Activated naive CD4-positive, alpha-beta T cell treated with anti-CD3 and anti-CD28 coated beads for 36 hours (primary cell): ENCODE measurements at regions of chr10 and their contacts with region 1.

Region 1: GRCh38 chr10:100373298-100374136 is 26.5 kb downstream of the SCD start:
- DNase-seq: peak; percentile 99
- H3K4me3 Mint-ChIP-seq: no peak overlapping the region
- H3K27ac Mint-ChIP-seq: no peak overlapping the region
- H3K4me1 Mint-ChIP-seq: peaks cover 30% of the 10 kb centered on the region
- H3K27me3 Mint-ChIP-seq: no peaks in the 10 kb centered on the region

Region 2: DNA sequence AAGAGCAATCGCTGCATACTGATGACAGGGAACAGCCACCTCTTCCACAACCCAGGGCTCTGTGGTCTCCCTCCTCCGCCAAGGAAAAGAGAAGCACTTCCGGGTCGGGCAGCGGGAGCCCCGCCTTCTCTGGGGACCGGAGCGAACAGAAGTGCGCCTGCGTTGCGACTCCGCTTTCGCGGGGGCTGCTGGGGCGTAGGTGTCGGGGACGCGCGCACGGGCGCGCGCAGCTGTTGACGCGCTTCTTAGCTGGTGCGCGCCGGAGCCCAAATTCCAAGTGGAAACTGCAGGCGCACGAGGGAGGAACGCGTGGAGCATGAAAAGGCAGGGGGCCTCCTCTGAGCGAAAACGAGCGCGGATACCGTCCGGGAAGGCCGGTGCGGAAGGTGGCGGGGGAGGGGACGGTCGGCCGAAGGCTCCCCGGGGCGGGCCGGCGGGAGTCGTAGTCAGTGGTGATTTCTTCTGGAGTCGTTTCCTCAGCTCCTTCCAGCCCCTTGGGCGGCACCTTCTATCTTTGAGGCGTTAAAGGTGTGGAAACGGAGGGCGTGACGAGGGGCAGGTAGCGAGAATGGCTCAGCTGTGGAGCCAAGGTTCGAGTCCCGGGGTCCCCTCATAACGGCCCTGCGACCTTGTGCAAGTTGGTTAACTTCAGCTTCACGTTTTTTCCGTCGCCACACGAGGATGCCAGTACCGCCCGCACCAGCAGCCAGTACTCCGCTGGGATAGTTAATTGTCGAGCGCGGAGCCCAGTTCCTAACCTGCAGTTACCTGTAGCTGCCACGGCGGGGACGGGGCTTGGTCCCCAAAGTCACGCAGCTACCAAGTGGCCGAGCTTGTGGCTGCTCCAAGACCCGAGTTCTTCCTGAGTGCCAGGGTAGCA is 641.2 kb before region 1 on chr10 and contains the starts of genes COX15 and CUTC:
- CTCF ChIA-PET with region 1: no interaction called
- intact Hi-C with region 1: loop called (anchors 5 kb)
- DNase-seq: peak; percentile 96
- H3K4me3 Mint-ChIP-seq: peak within 1 kb of the TSS; percentile 99
- H3K27ac Mint-ChIP-seq: peak within 1 kb of the TSS; percentile 96
- H3K4me1 Mint-ChIP-seq: peaks cover 32% of the 10 kb centered on the region
- H3K27me3 Mint-ChIP-seq: no peaks in the 10 kb centered on the region
- total RNA-seq, gene COX15: 36.3 to 38.8 TPM
- total RNA-seq, gene CUTC: 21.6 to 21.9 TPM

Region 3: GRCh38 chr10:100229819-100230422 is 143.6 kb before region 1 on chr10:
- CTCF ChIA-PET with region 1: no interaction called
- intact Hi-C with region 1: loop called (anchors 2 kb)
- DNase-seq: no peak
- H3K4me3 Mint-ChIP-seq: peak overlapping the region; percentile 91
- H3K27ac Mint-ChIP-seq: peak overlapping the region; percentile 90
- H3K4me1 Mint-ChIP-seq: peaks cover 31% of the 10 kb centered on the region
- H3K27me3 Mint-ChIP-seq: no peaks in the 10 kb centered on the region

Region 4: DNA sequence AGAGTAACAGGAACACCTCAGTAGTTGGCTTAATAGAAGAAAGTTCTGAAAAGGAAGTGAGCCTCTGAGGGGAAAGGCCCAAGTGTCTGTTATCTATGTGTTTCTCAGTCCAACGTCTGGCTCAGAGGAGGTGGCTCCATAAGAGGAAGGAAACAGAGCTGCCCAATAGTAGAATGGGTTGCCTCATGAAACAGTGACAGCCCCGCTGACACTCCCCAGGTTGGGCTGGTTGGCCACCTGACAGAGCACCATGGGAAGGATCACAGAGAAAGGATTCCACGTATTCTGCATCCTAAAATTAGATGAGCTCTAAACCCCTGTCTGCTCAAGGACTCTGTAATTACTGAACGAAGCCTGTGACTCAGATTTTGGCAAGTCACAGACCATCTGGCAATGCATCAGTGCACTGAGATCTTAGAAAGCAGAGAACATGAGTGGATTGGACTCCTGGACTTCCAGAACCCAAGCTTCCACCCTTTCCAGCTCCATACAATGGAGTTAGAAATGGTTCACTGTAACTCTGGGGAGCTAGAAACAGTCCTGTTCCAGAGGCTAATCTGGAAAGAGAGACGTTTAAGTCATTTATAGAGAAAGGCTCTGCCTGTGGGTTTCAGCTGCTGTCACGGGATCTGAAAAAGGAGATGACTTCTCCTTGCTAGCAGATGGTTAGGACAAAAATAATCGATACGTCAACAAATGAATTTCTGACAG is 46.4 kb before region 1 on chr10:
- CTCF ChIA-PET with region 1: interaction called, 3 read pairs
- intact Hi-C with region 1: loop called (anchors 1 kb)
- DNase-seq: peak; percentile 82
- H3K4me3 Mint-ChIP-seq: peak overlapping the region; percentile 5
- H3K27ac Mint-ChIP-seq: peak overlapping the region; percentile 80
- H3K4me1 Mint-ChIP-seq: peaks cover 16% of the 10 kb centered on the region
- H3K27me3 Mint-ChIP-seq: peaks cover 4% of the 10 kb centered on the region

Region 5: GRCh38 chr10:100529475-100530298 is 156.2 kb after region 1 on chr10 and contains the start of gene NDUFB8:
- CTCF ChIA-PET with region 1: interaction called, 3 read pairs
- intact Hi-C with region 1: loop called (anchors 2 kb)
- DNase-seq: peak; percentile 95
- H3K4me3 Mint-ChIP-seq: peak within 1 kb of the TSS; percentile 100
- H3K27ac Mint-ChIP-seq: peak within 1 kb of the TSS; percentile 95
- H3K4me1 Mint-ChIP-seq: peaks cover 37% of the 10 kb centered on the region
- H3K27me3 Mint-ChIP-seq: no peaks in the 10 kb centered on the region
- total RNA-seq, gene NDUFB8: 427 to 442 TPM